Activated CD4-positive, alpha-beta T cell treated with anti-CD3 and anti-CD28 coated beads, Interleukin-2, amount 10 ng/mL, durations not matched to agents 24 days and 14 days (primary cell): ENCODE measurements at regions of chr17 and their contacts with region 1.

Region 1: GRCh38 chr17:32783602-32784001 is 93.3 kb downstream of the MYO1D start:
- DNase-seq: peak; percentile 67
- H3K4me3 Mint-ChIP-seq: no peak overlapping the region
- H3K27ac Mint-ChIP-seq: no peak overlapping the region
- H3K4me1 Mint-ChIP-seq: no peaks in the 10 kb centered on the region
- H3K27me3 Mint-ChIP-seq: peaks cover 21% of the 10 kb centered on the region

Region 2: GRCh38 chr17:32909787-32910369 is 126.3 kb after region 1 on chr17:
- intact Hi-C with region 1: loop called (anchors 1 kb)
- DNase-seq: peak; percentile 87
- H3K4me3 Mint-ChIP-seq: no peak overlapping the region
- H3K27ac Mint-ChIP-seq: no peak overlapping the region
- H3K4me1 Mint-ChIP-seq: peaks cover 20% of the 10 kb centered on the region
- H3K27me3 Mint-ChIP-seq: peaks cover 34% of the 10 kb centered on the region

Region 3: DNA sequence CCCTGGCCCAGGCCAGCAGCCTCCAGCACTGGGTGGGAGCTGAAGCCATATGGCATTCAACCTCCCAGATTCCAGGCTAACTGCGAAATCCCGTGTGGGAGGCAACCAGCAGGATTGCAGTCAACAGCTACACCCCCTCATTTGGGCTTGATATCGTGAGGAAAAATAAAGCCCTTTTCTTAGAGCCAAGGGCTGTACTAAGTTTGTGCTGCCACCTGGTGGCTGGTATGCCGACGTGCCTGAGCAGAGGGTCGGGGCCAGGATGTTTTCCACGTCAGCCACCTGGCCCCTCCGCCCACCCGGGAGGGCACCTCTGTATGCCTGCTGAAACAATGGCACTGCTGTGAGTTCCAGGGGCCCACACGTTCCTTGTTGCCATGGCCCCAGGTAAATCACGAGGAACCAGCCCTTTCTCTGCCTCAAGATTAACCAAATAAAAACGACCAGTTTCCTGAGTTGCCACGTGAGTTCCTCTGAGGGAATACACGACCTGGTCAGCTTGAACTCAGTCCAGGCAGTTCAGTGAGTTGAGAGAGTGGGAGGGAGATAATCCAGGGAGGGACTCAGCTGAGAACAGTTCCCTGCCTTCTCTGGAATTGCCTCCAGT is 153.4 kb after region 1 on chr17:
- intact Hi-C with region 1: loop called (anchors 1 kb)
- DNase-seq: peak; percentile 87
- H3K4me3 Mint-ChIP-seq: no peak overlapping the region
- H3K27ac Mint-ChIP-seq: no peak overlapping the region
- H3K4me1 Mint-ChIP-seq: peaks cover 5% of the 10 kb centered on the region
- H3K27me3 Mint-ChIP-seq: peaks cover 23% of the 10 kb centered on the region